ENCODE measurements at regions of chr1 and their contacts with region 1.

Region 1: DNA sequence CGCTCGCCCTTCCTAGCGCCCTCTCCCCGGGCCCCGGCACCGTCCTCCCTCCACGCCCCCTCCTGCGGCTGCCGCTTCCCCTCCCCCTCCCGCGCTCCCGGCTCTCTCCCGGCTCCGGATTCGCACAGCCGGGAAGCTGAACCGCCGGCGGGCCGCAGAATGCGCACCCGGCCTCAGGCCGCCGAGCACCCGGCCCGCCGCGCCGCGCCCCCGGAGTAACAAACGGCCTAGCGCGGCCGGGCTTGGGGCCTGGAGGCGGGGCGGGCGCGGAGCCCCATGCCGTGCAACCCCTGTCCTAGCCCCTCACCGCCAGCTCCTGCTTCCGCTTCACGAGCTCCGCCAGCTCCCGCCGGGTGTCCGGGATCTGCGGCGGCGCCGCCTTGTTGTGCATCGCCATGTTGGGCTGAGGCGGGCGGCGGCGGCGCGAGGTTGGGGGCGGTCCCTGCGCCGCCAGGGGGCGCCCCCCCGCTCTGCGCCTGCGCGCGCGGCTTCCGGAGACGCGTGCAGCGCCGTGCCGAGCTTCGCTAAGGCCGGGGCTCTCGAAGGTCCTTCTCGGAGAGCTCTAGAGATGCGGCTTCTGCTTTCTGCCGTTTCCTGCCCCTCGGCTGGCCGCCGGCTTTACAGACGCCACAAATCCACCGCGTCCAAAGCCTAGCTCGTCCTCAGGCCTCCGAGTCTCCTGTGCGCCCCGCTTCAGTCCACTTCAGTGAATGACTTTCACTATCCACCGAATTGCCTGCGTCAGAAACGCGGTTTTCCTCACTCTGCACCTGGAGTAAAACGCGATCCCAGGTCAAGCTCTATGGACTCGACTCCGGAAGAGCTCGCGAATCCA is at the start of gene MEAF6:
- DNase-seq: peak; percentile 92
- H3K4me3 ChIP-seq: peak within 1 kb of the TSS; percentile 82
- H3K27ac ChIP-seq: peak within 1 kb of the TSS; percentile 47
- H3K4me1 ChIP-seq: peaks cover 16% of the 10 kb centered on the region
- CTCF ChIP-seq: peak; percentile 83
- total RNA-seq, gene MEAF6: 74.3 and 121 TPM in 2 replicates

Region 2: GRCh38 chr1:37474046-37474759 is 40.4 kb before region 1 on chr1 and contains the start of gene ZC3H12A:
- CTCF ChIA-PET with region 1: interaction called, 3 read pairs
- POLR2A ChIA-PET with region 1: interaction called, 8 read pairs
- intact Hi-C with region 1: loop called (anchors 2 kb)
- DNase-seq: peak; percentile 92
- H3K4me3 ChIP-seq: peak within 1 kb of the TSS; percentile 78
- H3K27ac ChIP-seq: peak within 1 kb of the TSS; percentile 78
- H3K4me1 ChIP-seq: peaks cover 47% of the 10 kb centered on the region
- CTCF ChIP-seq: no peak; the same call in 1 of the 2 replicates
- total RNA-seq, gene ZC3H12A: 11.2 and 20.7 TPM in 2 replicates